HEK293 (cell line): ENCODE measurements at regions of chr9 and their contacts with region 1.

Region 1: GRCh38 chr9:21789541-21790037 is 12.8 kb upstream of the MTAP start:
- H3K4me3 ChIP-seq: peak overlapping the region; percentile 19
- H3K27ac ChIP-seq: no peak overlapping the region
- H3K4me1 ChIP-seq: no peaks in the 10 kb centered on the region
- CTCF ChIP-seq: peak; percentile 67

Region 2: DNA sequence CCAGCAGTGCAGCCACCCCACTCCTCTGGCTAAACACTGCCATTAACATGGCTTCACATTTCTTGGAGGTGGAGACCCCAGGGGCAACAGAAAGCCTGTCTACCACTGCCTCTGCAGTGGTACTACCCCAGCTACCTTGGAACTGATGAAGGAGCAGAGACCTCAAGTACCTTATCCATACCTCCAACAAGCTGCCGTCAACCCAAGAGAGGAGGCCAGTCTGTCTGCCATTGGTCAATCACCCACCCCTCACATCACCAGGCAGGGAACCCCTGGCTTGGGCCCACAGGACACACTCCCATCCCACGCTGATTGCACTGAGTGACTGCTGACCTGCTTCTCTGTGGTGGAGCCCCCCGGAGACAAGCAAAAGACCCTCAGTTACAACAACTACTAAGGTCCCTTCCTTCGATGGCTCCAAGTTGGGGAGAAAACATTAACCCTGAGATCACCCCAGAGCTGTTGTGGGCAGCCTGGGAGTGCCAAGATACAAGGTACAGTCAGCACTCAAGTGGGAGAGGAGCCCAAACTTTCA is 555.4 kb before region 1 on chr9:
- CTCF ChIA-PET with region 1: interaction called, 18 read pairs
- POLR2A ChIA-PET with region 1: no interaction called
- H3K4me3 ChIP-seq: no peak overlapping the region
- H3K27ac ChIP-seq: no peak overlapping the region
- H3K4me1 ChIP-seq: no peaks in the 10 kb centered on the region
- CTCF ChIP-seq: no peak

Region 3: GRCh38 chr9:21317956-21318923 is 471.3 kb before region 1 on chr9:
- CTCF ChIA-PET with region 1: interaction called, 15 read pairs
- POLR2A ChIA-PET with region 1: no interaction called
- H3K4me3 ChIP-seq: no peak overlapping the region
- H3K27ac ChIP-seq: no peak overlapping the region
- H3K4me1 ChIP-seq: no peaks in the 10 kb centered on the region; the same call in 1 of the 2 replicates
- CTCF ChIP-seq: no peak

Region 4: DNA sequence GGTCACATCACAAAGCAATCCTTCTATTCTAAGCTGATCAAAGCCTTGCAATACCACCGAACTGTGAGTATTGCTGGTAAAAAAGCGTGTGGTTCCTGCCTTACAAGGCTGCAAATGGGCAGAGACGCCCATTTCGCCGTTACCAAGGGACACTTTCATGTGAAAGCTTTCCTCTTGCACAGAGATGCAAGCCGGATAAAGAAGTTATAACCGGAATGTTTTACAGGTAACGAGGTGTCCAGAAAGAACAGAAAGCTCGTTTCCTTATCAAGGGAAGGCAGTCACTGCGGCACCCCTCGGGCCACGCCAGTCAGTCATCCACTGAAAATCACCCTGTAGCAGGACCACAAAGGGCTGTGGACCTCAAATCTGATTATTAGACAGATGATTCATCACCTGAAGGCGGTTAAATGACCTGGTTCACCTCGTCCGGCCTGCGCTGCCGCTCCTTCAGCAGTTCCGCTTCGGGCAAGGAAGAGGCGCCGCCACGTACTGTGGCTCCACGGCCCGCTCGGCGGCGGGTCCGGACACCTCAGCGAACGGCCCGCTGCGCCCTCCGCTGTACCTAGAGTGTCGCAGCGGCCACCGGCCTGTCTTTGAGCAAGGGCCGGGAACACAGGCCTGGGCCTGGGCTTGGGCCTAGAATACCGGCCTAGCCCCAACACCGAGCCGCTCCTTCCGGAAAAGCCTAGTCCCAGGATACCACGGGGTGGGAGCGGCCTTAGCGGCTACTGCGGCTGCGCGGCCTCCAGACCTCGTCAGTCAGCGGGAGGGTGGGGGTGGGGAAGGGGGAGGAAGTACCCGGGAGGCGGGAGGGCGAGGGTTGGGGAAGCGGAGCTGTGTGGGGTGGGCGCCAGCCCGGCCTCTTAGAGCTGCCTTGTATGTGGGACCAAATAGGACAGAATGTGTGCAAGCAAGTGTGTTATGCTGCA is 454.6 kb before region 1 on chr9 and contains the start of gene KLHL9:
- CTCF ChIA-PET with region 1: interaction called, 10 read pairs
- POLR2A ChIA-PET with region 1: no interaction called
- H3K4me3 ChIP-seq: peak within 1 kb of the TSS; percentile 62
- H3K27ac ChIP-seq: peak within 1 kb of the TSS; percentile 98
- H3K4me1 ChIP-seq: peaks cover 15% of the 10 kb centered on the region
- CTCF ChIP-seq: peak; percentile 46; the same call in 1 of the 2 replicates

Region 5: DNA sequence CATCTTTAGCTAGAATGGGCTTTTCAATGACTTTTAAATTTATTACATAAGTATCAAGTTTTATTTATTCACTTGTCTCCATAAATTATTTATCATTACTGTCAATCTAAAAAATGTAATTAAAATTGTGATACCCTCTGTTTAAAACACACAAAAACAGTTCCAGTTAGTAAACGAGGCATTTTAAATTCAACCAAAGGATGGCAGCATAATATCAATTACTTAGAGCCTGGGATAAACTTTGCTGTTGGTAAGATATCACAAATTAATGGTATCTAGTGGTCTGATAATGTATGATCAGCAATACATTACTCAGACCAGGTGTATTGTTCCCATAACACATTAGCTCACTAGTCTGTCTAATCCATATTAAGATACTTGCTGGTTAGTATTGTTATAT is 297.8 kb before region 1 on chr9:
- CTCF ChIA-PET with region 1: interaction called, 25 read pairs
- POLR2A ChIA-PET with region 1: no interaction called
- H3K4me3 ChIP-seq: no peak overlapping the region
- H3K27ac ChIP-seq: no peak overlapping the region
- H3K4me1 ChIP-seq: no peaks in the 10 kb centered on the region
- CTCF ChIP-seq: no peak

Region 6: DNA sequence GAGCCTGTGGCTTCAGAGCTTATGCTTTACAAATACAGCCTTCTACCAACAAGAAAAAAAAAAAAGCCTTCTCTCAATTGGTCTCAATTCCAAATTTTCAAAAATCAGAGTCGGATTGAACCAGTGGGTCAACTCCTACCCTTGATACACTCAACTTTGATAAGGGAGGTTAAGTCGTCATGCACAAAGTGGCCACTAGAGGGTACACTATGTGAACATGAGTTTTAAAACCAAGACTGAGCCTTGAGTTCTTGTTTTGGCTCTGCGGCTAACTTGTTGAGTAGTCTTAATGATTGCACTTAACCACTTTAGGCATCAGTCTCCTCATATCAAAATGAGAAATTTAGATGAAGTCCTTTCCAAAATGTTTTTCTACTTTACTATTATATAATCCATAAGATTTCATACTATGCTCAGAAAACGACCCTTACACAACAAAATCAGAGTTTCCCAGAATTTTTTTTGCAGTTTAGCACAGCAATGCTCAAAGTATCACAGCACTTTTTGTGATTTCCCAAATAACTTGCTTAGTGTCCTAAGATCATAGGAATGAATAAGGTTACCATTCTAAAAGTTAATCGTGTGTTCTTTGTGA is 80.0 kb before region 1 on chr9:
- CTCF ChIA-PET with region 1: interaction called, 31 read pairs
- POLR2A ChIA-PET with region 1: no interaction called
- H3K4me3 ChIP-seq: no peak overlapping the region
- H3K27ac ChIP-seq: no peak overlapping the region
- H3K4me1 ChIP-seq: no peaks in the 10 kb centered on the region
- CTCF ChIP-seq: 0 out of 2 replicates have a peak, but pooled peaks have one; percentile 14

Region 7: GRCh38 chr9:21883642-21884041 is 94.1 kb after region 1 on chr9:
- CTCF ChIA-PET with region 1: no interaction called
- POLR2A ChIA-PET with region 1: no interaction called
- H3K4me3 ChIP-seq: no peak overlapping the region
- H3K27ac ChIP-seq: no peak overlapping the region
- H3K4me1 ChIP-seq: no peaks in the 10 kb centered on the region
- CTCF ChIP-seq: no peak

Region 8: GRCh38 chr9:21995177-21996086 is 205.8 kb after region 1 on chr9:
- CTCF ChIA-PET with region 1: no interaction called
- POLR2A ChIA-PET with region 1: no interaction called
- H3K4me3 ChIP-seq: peak overlapping the region; percentile 59
- H3K27ac ChIP-seq: peak overlapping the region; percentile 99
- H3K4me1 ChIP-seq: peaks cover 5% of the 10 kb centered on the region; the same call in 1 of the 2 replicates
- CTCF ChIP-seq: no peak